Panc1 (cell line): ENCODE measurements at regions of chr17 and their contacts with region 1.

Region 1: GRCh38 chr17:73304971-73305812 is 6.6 kb downstream of the CDC42EP4 start:
- DNase-seq: no peak
- ATAC-seq: peak; percentile 68
- H3K4me3 ChIP-seq: peak overlapping the region; percentile 25 to 57
- H3K27ac ChIP-seq: peak overlapping the region; percentile 97
- H3K4me1 ChIP-seq: peaks cover 76% of the 10 kb centered on the region
- H3K27me3 ChIP-seq: no peaks in the 10 kb centered on the region
- CTCF ChIP-seq: no peak

Region 2: DNA sequence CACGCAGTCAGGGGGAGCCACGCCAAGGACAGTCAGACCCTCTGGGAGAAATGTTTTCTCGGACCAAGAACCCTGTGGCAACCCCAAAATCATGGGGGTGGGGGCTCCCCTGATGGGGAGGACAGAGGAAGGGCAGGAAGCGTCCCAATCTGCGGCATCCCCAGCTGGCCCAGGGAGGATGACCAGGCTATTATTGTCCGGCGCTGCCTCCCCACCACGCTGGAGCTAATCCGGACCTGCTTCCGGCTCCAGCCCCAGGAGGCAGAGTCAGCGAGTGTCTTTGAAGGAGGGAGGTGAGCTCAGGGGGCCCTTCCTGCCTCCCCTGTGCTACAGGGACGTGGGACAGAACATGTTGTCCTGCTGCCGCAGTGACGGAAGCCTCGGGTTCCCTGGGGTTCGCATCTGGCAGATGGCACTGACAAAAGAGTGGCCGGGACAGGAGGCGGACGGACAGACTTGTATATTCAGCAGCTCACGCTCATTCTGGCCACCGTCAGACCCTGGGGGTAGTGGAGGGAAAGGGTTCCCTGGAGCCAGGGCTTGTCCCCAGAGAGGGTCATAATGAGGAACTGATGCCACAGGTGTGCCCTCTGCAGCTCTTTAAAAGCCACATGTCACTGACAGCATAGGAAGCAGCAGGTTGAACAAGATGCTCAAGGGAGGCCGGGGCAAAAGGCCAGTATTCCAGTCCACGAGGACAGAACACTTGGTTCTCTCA is 60.9 kb after region 1 on chr17:
- CTCF ChIA-PET with region 1: interaction called, 34 read pairs
- POLR2A ChIA-PET with region 1: no interaction called
- in situ Hi-C with region 1: no loop called
- intact Hi-C with region 1: loop called (anchors 5 kb)
- DNase-seq: no peak
- ATAC-seq: no peak
- H3K4me3 ChIP-seq: no peak overlapping the region
- H3K27ac ChIP-seq: no peak overlapping the region
- H3K4me1 ChIP-seq: no peaks in the 10 kb centered on the region; the same call in 1 of the 2 replicates
- H3K27me3 ChIP-seq: no peaks in the 10 kb centered on the region
- CTCF ChIP-seq: no peak

Region 3: GRCh38 chr17:74873038-74873873 is 1568.1 kb after region 1 on chr17:
- CTCF ChIA-PET with region 1: interaction called, 19 read pairs
- POLR2A ChIA-PET with region 1: no interaction called
- in situ Hi-C with region 1: no loop called
- intact Hi-C with region 1: no loop called
- DNase-seq: peak; percentile 98
- ATAC-seq: peak; percentile 97
- H3K4me3 ChIP-seq: peak overlapping the region; percentile 83 to 86
- H3K27ac ChIP-seq: peak overlapping the region; percentile 97
- H3K4me1 ChIP-seq: peaks cover 9% of the 10 kb centered on the region
- H3K27me3 ChIP-seq: no peaks in the 10 kb centered on the region
- CTCF ChIP-seq: no peak